Ovary (tissue), 10 donors: ENCODE measurements at regions of chr12 and their contacts with region 1.

Region 1: GRCh38 chr12:113422030-113422885 is at the start of gene SDSL:
- DNase-seq: peak; percentile 62 to 71 (median 70)
- H3K4me3 ChIP-seq: peak within 1 kb of the TSS; percentile 31
- H3K27ac ChIP-seq: peak within 1 kb of the TSS in 1 of 2 donors; percentile 46
- H3K4me1 ChIP-seq: peaks cover 7% of the 10 kb centered on the region
- H3K27me3 ChIP-seq: no peaks in the 10 kb centered on the region
- CTCF ChIP-seq: no peak
- EP300 ChIP-seq: no peak
- POLR2A ChIP-seq: no peak
- total RNA-seq, gene SDSL: 1.7 to 19.3 (median 4.5) TPM

Region 2: DNA sequence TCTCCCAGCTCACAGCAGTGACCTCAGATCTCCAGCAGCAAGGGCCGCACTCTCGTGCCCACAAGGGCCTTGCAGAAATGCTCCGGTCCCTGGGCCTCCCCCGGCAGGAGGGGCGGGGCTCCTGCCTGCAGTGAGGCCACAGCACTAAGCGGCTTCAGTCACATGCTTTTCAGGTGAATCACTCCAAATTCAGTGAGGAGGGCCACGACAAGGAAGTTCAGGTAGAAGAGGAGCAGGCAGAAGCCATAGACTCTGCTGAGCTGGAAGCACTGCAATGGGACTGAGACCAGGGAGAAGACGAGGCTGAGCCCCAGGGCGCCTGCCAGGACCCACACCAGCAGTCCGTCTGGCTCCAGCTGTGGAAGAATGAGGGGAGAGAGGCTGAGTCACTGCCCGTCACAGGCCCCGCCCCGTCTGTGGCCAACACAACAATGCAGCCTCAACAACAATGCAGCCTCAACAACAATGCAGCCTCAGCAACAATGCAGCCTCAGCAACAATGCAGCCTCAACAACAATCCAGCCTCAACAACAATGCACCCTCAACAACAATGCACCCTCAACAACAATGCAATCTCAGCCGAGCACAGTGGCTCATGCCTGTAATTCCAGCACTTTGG is 122.5 kb before region 1 on chr12:
- intact Hi-C with region 1: loop called in 1 of 4 experiments (anchors 10 kb)
- DNase-seq: peak; percentile 75 to 83 (median 78)
- H3K4me3 ChIP-seq: no peak overlapping the region
- H3K27ac ChIP-seq: peak overlapping the region in 1 of 2 donors; percentile 42
- H3K4me1 ChIP-seq: peaks cover 24% of the 10 kb centered on the region
- H3K27me3 ChIP-seq: no peaks in the 10 kb centered on the region
- CTCF ChIP-seq: no peak
- EP300 ChIP-seq: no peak
- POLR2A ChIP-seq: no peak

Region 3: GRCh38 chr12:113591480-113591974 is 169.3 kb after region 1 on chr12:
- intact Hi-C with region 1: no loop called
- DNase-seq: no peak
- H3K4me3 ChIP-seq: no peak overlapping the region
- H3K27ac ChIP-seq: no peak overlapping the region
- H3K4me1 ChIP-seq: no peaks in the 10 kb centered on the region
- H3K27me3 ChIP-seq: no peaks in the 10 kb centered on the region
- CTCF ChIP-seq: no peak
- EP300 ChIP-seq: no peak
- POLR2A ChIP-seq: no peak